T-cell (primary cell): ENCODE measurements at regions of chr3 and their contacts with region 1.

Region 1: DNA sequence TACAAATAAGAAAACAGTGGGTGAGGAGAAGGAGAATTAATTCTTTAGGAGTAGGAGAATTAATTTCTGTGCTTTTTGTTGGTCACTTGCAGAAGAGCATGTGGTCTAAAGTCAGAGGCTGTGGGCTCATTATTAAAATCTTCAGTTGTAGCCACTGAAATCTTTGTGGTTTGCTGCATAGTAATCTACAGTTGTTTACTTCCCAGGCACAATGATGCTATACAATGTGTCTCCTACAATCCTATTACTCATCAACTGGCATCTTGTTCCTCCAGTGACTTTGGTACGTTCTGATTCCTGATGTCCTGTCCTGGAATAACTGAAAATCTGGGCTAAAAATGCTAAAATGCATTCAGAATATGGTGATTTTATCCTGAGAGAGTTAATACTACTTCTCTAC is 21.0 kb downstream of the IFT122 start:
- DNase-seq: no peak
- ATAC-seq: no peak
- H3K4me3 ChIP-seq: no peak overlapping the region
- H3K4me3 Mint-ChIP-seq: no peak overlapping the region
- H3K27ac ChIP-seq: no peak overlapping the region
- H3K27ac Mint-ChIP-seq: no peak overlapping the region
- H3K4me1 ChIP-seq: no peaks in the 10 kb centered on the region
- H3K4me1 Mint-ChIP-seq: peaks cover 0 to 4% (median 2%) of the 10 kb centered on the region in 3 donors
- H3K27me3 ChIP-seq: no peaks in the 10 kb centered on the region
- H3K27me3 Mint-ChIP-seq: no peaks in the 10 kb centered on the region

Region 2: GRCh38 chr3:129449279-129450115 is 11.5 kb before region 1 on chr3:
- CTCF ChIA-PET with region 1: interaction called, 6 to 10 read pairs
- POLR2A ChIA-PET with region 1: no interaction called
- DNase-seq: no peak
- ATAC-seq: no peak
- H3K4me3 ChIP-seq: no peak overlapping the region
- H3K4me3 Mint-ChIP-seq: no peak overlapping the region
- H3K27ac ChIP-seq: no peak overlapping the region
- H3K27ac Mint-ChIP-seq: no peak overlapping the region
- H3K4me1 ChIP-seq: peaks cover 0 to 5% of the 10 kb centered on the region in 2 experiments
- H3K4me1 Mint-ChIP-seq: peaks cover 6 to 8% (median 6%) of the 10 kb centered on the region in 3 donors
- H3K27me3 ChIP-seq: no peaks in the 10 kb centered on the region
- H3K27me3 Mint-ChIP-seq: no peaks in the 10 kb centered on the region